ENCODE measurements at regions of chr12 and their contacts with region 1.

Region 1: GRCh38 chr12:12704593-12705230 is 8.7 kb upstream of the GPR19 start:
- H3K4me3 Mint-ChIP-seq: no peak overlapping the region
- H3K27ac Mint-ChIP-seq: no peak overlapping the region
- H3K4me1 Mint-ChIP-seq: peaks cover 13% of the 10 kb centered on the region
- H3K27me3 Mint-ChIP-seq: no peaks in the 10 kb centered on the region

Region 2: GRCh38 chr12:11553871-11554533 is 1150.7 kb before region 1 on chr12:
- intact Hi-C with region 1: loop called (anchors 10 kb)
- H3K4me3 Mint-ChIP-seq: no peak overlapping the region
- H3K27ac Mint-ChIP-seq: no peak overlapping the region
- H3K4me1 Mint-ChIP-seq: peaks cover 43% of the 10 kb centered on the region
- H3K27me3 Mint-ChIP-seq: no peaks in the 10 kb centered on the region

Region 3: GRCh38 chr12:12039897-12040296 is 664.8 kb before region 1 on chr12:
- intact Hi-C with region 1: loop called (anchors 5 kb)
- H3K4me3 Mint-ChIP-seq: no peak overlapping the region
- H3K27ac Mint-ChIP-seq: no peak overlapping the region
- H3K4me1 Mint-ChIP-seq: peaks cover 5% of the 10 kb centered on the region
- H3K27me3 Mint-ChIP-seq: no peaks in the 10 kb centered on the region

Region 4: GRCh38 chr12:12376646-12377448 is 327.9 kb before region 1 on chr12:
- intact Hi-C with region 1: loop called (anchors 1 kb)
- H3K4me3 Mint-ChIP-seq: no peak overlapping the region
- H3K27ac Mint-ChIP-seq: no peak overlapping the region
- H3K4me1 Mint-ChIP-seq: peaks cover 36% of the 10 kb centered on the region
- H3K27me3 Mint-ChIP-seq: no peaks in the 10 kb centered on the region

Measured in dendritic cell treated with granulocyte-macrophage colony-stimulating factor and Interleukin-4, amounts not matched to agents 40 ng/mL and 50 ng/mL, for 4 days (primary cell).